MCF 10A (cell line): ENCODE measurements at regions of chr22 and their contacts with region 1.

Region 1: GRCh38 chr22:45918459-45919370 is 58.2 kb downstream of the WNT7B start:
- DNase-seq: peak; percentile 69
- H3K4me3 Mint-ChIP-seq: no peak overlapping the region
- H3K27ac Mint-ChIP-seq: no peak overlapping the region
- H3K4me1 Mint-ChIP-seq: peaks cover 5% of the 10 kb centered on the region
- H3K27me3 Mint-ChIP-seq: no peaks in the 10 kb centered on the region
- CTCF ChIP-seq: no peak

Region 2: DNA sequence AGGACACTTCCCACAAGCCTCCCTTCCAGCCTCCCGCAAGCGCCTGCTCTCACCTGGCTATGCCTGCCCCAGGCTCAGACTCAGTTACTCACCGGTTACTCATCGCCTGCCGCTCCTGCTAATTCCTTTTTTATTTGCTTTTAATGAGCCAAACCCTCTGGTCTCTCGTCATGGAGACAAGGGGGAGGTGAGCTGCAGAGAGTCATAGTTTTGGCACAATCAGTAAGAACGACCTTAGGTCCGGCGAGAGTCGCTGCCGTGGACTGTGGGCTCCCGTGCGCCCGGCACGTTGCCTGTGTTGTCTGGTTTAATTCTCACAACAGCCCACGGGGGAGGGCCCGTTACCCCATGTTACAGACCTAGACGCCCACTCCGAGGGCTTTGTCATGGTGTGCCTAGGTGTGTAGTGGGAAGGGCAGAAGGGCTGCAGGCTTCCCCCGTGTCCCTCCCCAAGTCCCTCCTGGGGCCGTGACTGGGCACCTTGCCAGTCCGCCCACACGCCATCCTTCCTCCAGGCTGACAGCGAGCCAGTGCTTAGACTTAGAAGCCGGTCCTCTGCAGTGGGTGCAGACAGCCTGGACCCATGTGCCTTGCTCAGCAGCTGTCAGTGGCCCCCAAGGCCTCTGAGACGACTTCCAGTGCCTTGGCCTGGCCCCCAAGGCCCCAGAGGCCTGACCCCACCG is 16.1 kb after region 1 on chr22:
- CTCF ChIA-PET with region 1: interaction called, 6 read pairs
- POLR2A ChIA-PET with region 1: no interaction called
- intact Hi-C with region 1: loop called (anchors 2 kb)
- DNase-seq: peak; percentile 98
- H3K4me3 Mint-ChIP-seq: peak overlapping the region; percentile 66
- H3K27ac Mint-ChIP-seq: peak overlapping the region; percentile 83
- H3K4me1 Mint-ChIP-seq: peaks cover 24% of the 10 kb centered on the region
- H3K27me3 Mint-ChIP-seq: no peaks in the 10 kb centered on the region
- CTCF ChIP-seq: no peak

Region 3: DNA sequence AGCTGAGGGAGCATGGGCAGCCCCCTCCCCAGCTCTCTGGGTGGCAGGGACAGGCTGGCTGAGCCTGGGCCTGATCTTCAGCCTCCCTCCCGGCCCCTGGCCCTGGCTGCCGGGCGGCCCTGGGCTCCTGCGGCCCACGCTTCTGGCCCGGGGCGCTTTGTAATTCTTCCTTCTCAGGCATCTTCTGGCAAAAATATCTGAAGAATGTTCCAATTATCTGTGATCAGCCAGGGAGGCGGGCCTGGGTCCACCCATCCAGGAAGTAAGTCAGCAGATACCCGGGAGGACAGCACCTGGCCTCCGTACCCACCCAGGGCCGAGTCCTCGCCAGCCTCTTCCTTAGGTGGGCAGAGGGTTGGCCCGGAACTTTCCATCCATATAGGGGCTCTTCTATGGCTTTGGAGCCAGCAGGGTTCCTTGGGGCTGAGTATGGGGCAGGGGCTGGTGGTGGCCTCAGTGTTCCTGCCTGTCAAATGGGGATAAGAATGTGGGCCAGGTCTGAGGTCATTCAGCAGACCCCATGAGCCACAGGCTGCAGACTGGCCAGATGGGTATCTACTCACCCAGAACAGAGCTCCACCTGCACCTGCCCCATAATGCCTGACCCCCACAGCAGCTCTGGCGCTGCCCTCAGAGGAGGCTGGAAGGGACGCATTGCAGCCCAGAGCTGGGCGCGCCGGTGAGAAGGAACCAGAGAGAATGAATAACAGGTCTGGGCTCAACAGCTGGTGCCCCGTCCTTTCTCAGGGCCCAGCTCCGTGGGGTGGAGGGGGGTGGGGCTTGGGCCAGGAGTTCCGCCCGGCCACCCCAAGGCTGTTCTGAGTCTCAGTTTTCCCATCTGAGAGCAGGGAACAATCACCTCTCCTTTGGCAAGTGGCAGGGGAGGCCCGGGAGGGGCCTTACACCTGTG is 42.0 kb after region 1 on chr22:
- CTCF ChIA-PET with region 1: no interaction called
- POLR2A ChIA-PET with region 1: no interaction called
- intact Hi-C with region 1: no loop called
- DNase-seq: no peak
- H3K4me3 Mint-ChIP-seq: no peak overlapping the region
- H3K27ac Mint-ChIP-seq: no peak overlapping the region
- H3K4me1 Mint-ChIP-seq: no peaks in the 10 kb centered on the region
- H3K27me3 Mint-ChIP-seq: no peaks in the 10 kb centered on the region
- CTCF ChIP-seq: no peak